Spleen (tissue), 13 donors: ENCODE measurements at regions of chr2 and their contacts with region 1.

Region 1: DNA sequence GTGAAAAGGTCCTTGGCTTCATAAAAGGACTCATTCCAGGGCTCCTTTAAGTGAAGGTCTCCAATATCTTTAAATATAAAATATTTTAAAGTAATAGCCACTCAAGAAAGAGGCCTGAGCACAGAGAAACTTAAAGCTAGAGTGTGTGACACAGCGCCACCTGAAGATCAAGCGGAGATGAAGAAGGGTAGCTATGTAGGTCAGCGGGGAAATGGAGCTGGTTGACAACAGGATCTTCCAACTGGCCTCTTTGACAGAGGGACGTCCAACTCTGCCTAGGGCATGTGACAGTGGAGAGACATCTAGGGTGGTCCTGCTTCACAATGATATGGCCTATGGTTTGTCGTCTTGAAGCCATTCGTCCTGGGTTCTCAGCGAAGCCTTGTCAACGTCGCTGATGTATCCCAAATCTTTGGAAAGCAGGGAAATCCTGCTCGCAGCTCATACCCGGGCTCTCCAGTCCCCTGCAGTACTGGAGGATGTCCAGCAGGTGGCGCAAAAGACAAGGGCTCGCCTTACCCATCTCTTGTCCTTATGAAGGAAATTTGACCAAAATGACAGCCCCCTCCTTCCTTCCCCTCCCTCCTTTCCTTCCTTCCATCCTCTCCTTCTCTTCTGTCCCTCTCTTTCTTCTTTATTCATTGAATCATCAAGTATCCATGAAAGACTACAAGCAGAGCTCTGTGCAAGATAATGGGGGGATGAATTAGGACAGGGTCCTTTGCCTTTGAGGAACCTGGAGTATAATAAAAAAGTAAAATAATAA is 59.6 kb downstream of the LONRF2 start:
- DNase-seq: peak; percentile 88
- H3K4me3 ChIP-seq: no peak overlapping the region
- H3K27ac ChIP-seq: no peak overlapping the region
- H3K4me1 ChIP-seq: peaks cover 0 to 25% (median 7%) of the 10 kb centered on the region in 6 donors
- H3K27me3 ChIP-seq: no peaks in the 10 kb centered on the region
- CTCF ChIP-seq: peak; percentile 81 to 96 (median 95)
- POLR2A ChIP-seq: no peak

Region 2: GRCh38 chr2:99559075-99559662 is 703.6 kb before region 1 on chr2:
- intact Hi-C with region 1: loop called (anchors 5 kb)
- DNase-seq: peak; percentile 96
- H3K4me3 ChIP-seq: no peak overlapping the region
- H3K27ac ChIP-seq: no peak overlapping the region
- H3K4me1 ChIP-seq: peaks cover 0 to 25% (median 6%) of the 10 kb centered on the region in 6 donors
- H3K27me3 ChIP-seq: no peaks in the 10 kb centered on the region
- CTCF ChIP-seq: peak; percentile 92 to 99 (median 96)
- POLR2A ChIP-seq: no peak

Region 3: DNA sequence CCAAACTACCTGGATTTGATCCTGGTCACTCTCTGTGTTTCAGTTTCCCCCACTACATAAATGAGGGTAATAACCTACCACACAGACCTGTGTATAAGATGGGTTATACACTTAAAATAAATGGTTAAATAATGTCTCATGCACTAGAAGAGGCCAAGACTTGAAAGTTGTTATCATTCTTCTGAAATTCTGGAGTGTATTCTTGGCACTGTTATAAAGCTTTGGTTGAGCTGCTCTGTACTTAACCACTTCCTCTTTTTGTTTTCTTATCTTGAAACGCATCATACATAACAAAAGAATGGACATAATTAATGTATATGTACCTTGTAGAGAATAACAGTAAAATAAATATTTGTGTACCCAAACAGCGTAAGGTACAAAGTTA is 401.4 kb before region 1 on chr2:
- intact Hi-C with region 1: no loop called
- DNase-seq: no peak
- H3K4me3 ChIP-seq: no peak overlapping the region
- H3K27ac ChIP-seq: no peak overlapping the region
- H3K4me1 ChIP-seq: peaks cover 5 to 60% (median 25%) of the 10 kb centered on the region in 6 donors
- H3K27me3 ChIP-seq: no peaks in the 10 kb centered on the region
- CTCF ChIP-seq: no peak
- POLR2A ChIP-seq: no peak

Region 4: DNA sequence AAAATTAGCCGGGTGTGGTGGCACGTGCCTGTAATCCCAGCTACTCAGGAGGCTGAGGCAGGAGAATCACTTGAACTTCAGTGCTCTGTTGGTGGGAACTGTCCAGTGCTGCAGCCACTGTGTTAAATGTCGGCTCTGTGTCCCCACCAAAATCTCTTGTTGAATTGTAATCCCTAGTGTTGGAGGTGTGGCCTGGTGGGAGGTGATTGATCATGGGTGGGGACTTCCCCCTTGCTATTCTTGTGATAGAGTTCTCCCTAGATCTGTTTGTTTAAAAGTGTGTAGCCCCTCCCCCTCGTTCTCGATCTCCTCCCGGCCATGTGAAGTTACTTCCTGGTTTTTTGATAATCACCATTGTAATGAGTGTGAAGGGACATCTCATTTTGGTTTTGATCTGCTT is 729.5 kb after region 1 on chr2:
- intact Hi-C with region 1: loop called (anchors 10 kb)
- DNase-seq: no peak
- H3K4me3 ChIP-seq: no peak overlapping the region
- H3K27ac ChIP-seq: no peak overlapping the region
- H3K4me1 ChIP-seq: peaks cover 0 to 3% (median 0%) of the 10 kb centered on the region in 6 donors
- H3K27me3 ChIP-seq: no peaks in the 10 kb centered on the region
- CTCF ChIP-seq: no peak
- POLR2A ChIP-seq: no peak